ENCODE measurements at regions of chr19 and their contacts with region 1.

Region 1: DNA sequence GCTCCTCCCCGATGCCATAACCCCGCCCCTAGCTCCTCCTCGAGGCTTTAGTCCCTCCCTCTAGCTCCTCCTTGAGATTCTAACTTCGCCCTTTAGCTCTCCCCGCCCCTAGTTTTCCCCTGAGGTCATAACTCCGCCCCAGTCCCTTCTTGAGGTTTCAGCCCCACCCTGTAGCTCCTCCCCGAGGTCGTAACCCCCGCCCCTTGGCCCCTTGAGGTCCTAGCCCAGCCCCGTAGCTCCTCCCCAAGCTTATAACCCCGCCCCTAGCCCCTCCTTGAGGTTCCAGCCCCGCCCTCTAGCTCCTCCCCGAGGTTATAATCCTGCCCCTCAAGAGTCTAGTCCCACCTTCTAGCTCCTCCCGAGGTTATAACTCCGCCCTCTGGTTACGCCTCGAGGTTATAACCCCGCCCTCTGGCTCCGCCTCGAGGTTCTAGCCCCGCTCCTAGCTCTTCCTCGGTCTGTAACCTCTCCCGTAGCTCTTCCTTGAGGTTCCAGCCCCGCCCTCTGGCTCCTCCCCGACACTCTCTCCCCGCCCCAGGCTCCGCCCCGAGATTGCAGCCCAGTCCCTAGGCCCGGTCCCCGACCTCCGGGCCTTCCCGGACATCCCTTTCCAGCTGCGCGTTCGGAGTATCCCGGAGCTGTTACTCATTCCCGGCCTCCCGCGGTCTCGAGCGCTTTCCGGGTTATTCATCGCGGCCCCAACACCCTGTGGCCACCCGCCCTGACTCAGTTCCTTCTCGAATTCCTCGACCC is 1.4 kb downstream of the PLAUR start:
- DNase-seq: peak; percentile 94
- H3K4me3 Mint-ChIP-seq: peak overlapping the region; percentile 89
- H3K27ac Mint-ChIP-seq: peak overlapping the region; percentile 74
- H3K4me1 Mint-ChIP-seq: peaks cover 30% of the 10 kb centered on the region
- H3K27me3 Mint-ChIP-seq: peaks cover 9% of the 10 kb centered on the region

Region 2: DNA sequence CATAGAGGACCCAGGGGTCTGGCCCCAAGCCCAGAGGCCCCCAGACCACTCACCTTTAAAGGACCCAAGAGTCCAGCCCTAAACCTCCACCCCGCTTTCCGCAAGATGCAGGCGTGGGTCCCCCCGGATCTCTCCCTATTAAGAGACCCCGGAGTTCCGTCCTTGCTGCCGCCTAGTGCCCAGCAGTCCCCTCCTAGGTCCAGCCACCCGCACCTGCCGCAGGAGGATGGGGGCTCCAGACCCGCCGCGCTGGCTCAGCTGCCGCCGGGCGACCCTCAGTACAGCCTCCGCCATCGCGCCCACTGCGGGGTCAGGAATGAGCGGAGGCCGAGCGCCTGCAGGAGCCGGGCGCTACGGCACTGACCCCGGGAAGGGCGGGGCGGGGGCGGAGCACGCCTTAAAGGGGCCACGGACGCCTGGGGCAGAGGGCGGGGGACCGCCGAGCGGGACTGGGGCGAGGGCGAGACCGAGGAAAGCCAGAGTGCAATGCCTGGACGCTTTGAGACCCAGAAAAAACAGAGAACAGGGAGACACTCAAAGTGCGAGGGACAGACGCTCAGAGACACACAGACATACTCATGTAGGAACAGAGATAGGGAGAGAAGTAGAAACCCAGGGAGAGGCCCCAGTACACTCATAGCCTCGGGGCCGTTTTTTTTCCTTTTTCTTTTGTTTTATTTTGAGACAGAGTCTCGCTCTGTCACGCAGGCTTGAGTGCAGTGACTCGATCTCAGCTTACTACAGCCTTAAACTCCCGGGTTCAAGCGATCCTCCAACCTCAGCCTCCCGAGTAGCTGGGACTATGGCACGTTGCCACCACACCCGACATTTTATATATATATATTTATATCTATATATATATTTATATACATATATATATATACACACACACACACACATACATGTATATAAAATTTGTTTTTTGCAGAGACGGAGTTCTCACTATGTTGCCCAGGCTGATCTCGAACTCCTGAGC is 141.4 kb before region 1 on chr19 and contains the start of gene ETHE1:
- intact Hi-C with region 1: loop called (anchors 2 kb)
- DNase-seq: peak; percentile 76
- H3K4me3 Mint-ChIP-seq: peak within 1 kb of the TSS; percentile 87
- H3K27ac Mint-ChIP-seq: peak within 1 kb of the TSS; percentile 97
- H3K4me1 Mint-ChIP-seq: peaks cover 12% of the 10 kb centered on the region
- H3K27me3 Mint-ChIP-seq: no peaks in the 10 kb centered on the region
- total RNA-seq, gene ETHE1: 64.6 and 65.5 TPM in 2 replicates

Region 3: DNA sequence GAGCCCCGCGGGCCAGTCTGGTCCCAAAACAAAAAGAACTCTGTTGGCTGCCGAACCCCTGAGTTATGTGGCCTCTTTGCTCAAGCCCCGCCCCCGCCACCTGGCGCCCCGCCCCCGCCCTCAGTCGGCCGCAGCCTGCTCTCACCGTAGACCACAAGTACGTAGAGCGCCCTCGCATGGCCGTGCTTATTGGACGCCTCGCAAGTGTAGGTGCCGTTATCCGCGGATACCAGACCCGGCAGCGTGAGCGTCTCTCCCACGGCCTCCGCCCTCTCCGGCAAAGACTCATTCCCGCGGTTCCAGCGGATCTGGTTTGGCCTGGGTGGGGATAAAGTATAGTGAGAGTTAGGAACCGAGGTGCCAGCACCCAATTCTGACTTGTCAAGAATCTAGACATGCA is 43.6 kb before region 1 on chr19:
- intact Hi-C with region 1: no loop called
- DNase-seq: peak; percentile 78
- H3K4me3 Mint-ChIP-seq: no peak overlapping the region
- H3K27ac Mint-ChIP-seq: no peak overlapping the region
- H3K4me1 Mint-ChIP-seq: peaks cover 22% of the 10 kb centered on the region
- H3K27me3 Mint-ChIP-seq: peaks cover 5% of the 10 kb centered on the region

Region 4: DNA sequence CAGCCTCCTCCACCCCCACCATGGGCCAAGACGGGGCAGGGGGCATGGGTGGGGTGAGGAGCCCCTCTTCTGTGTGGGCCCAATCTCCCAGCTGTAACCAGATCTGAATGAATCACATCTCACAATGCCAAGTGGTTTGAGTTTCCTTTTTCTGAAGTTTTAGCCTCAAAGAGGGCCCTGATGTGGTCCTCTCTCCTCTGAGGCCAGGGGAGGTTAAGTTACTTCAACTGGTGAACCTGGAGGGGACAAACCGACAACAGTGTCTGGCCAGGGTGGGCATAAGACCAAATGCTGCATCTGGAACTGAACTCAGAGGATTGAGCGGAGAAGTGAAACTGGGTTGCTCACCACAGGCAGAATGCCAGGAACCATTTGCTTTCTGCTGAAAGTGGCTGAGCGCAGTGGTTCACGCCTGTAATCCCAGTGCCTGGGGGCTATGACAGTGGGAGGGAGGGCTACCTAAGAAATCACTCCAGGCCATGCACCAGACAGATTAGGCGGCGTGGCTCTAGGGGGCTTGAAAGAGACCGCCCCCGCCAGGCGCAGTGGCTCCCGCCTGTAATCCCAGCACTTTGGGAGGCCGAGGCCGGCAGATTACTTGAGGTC is 31.9 kb after region 1 on chr19:
- intact Hi-C with region 1: loop called (anchors 2 kb)
- DNase-seq: no peak
- H3K4me3 Mint-ChIP-seq: peak overlapping the region; percentile 82
- H3K27ac Mint-ChIP-seq: peak overlapping the region; percentile 96
- H3K4me1 Mint-ChIP-seq: peaks cover 21% of the 10 kb centered on the region
- H3K27me3 Mint-ChIP-seq: peaks cover 19% of the 10 kb centered on the region

Region 5: GRCh38 chr19:43754503-43755255 is 86.1 kb after region 1 on chr19 and contains the start of gene SMG9:
- intact Hi-C with region 1: loop called (anchors 1 kb)
- DNase-seq: peak; percentile 99
- H3K4me3 Mint-ChIP-seq: peak within 1 kb of the TSS; percentile 96
- H3K27ac Mint-ChIP-seq: peak within 1 kb of the TSS; percentile 100
- H3K4me1 Mint-ChIP-seq: peaks cover 50% of the 10 kb centered on the region
- H3K27me3 Mint-ChIP-seq: no peaks in the 10 kb centered on the region
- total RNA-seq, gene SMG9: 69.1 and 73.1 TPM in 2 replicates

Region 6: DNA sequence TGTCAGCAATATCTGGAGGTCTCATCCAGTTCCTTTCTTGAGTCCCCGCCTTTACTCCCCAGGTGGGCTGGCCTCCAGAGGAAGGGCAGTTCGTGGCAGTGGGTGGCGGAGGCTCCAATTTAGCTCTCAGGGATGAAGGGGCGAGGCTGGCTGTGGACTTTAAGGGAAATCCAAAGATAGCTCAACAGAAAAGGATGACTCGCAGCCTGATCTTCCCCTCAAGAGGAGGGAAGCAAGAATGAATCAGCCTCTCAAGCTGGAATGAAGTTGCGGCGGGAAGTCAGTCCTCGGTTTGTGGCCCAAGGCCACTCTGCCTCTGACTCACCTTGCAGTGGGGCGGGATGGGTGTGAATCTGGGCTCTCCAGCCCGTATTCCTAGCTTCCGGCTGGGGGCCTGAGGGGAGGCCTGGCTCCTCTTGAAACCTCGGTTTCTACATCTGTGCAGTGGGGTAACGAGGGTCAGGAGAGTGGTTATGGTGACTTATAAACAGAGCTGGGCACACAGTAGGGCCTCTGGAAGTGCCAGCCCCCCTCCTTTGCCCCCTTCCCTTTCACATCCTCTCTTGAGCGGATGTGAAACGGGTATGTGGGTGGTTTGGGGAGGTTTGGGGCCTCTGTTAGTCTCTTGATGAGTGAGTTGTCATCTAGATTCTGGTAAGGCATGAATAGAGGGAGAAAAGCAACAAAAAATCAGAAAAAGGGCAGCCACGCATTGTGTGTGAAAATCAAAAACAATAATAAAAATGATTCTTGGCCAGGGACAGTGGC is 96.7 kb after region 1 on chr19:
- intact Hi-C with region 1: loop called (anchors 1 kb)
- DNase-seq: peak; percentile 79
- H3K4me3 Mint-ChIP-seq: peak overlapping the region; percentile 19
- H3K27ac Mint-ChIP-seq: peak overlapping the region; percentile 74
- H3K4me1 Mint-ChIP-seq: peaks cover 63% of the 10 kb centered on the region
- H3K27me3 Mint-ChIP-seq: no peaks in the 10 kb centered on the region